Mammary epithelial cell (primary cell): ENCODE measurements at regions of chr1 and their contacts with region 1.

Region 1: DNA sequence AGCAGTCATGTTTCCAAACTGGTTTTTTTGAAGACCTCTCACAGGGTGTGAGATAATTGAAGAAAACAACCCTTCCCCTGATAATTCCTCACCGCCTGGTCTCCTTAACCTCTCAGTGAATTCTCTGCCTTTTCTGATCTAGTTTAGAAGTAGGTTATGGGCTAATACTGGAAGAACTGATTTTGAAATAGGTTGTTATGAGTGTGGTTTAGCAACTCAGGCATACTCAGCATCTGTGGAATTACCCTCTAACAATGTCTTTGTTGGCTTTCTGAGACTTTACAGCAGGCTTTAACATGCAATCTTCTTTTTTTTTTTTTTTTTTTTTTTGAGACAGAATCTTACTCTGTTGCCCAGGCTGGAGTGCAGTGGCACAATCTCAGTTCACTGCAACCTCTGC is 10.2 kb upstream of the PLD5 start:
- DNase-seq: peak; percentile 81
- H3K4me3 ChIP-seq: no peak overlapping the region
- H3K27ac ChIP-seq: peak overlapping the region; percentile 56
- H3K4me1 ChIP-seq: peaks cover 45% of the 10 kb centered on the region
- H3K27me3 ChIP-seq: no peaks in the 10 kb centered on the region
- CTCF ChIP-seq: no peak

Region 2: GRCh38 chr1:242489545-242489944 is 45.2 kb before region 1 on chr1:
- CTCF ChIA-PET with region 1: no interaction called
- dilution Hi-C with region 1: no loop called
- in situ Hi-C with region 1: no loop called
- intact Hi-C with region 1: no loop called
- DNase-seq: no peak
- H3K4me3 ChIP-seq: no peak overlapping the region
- H3K27ac ChIP-seq: no peak overlapping the region
- H3K4me1 ChIP-seq: no peaks in the 10 kb centered on the region
- H3K27me3 ChIP-seq: no peaks in the 10 kb centered on the region
- CTCF ChIP-seq: no peak

Region 3: GRCh38 chr1:242605521-242605920 is 70.8 kb after region 1 on chr1:
- CTCF ChIA-PET with region 1: no interaction called
- dilution Hi-C with region 1: loop called (anchors 5 kb)
- in situ Hi-C with region 1: no loop called
- intact Hi-C with region 1: loop called (anchors 5 kb)
- DNase-seq: peak; percentile 76
- H3K4me3 ChIP-seq: no peak overlapping the region
- H3K27ac ChIP-seq: no peak overlapping the region
- H3K4me1 ChIP-seq: peaks cover 23% of the 10 kb centered on the region
- H3K27me3 ChIP-seq: no peaks in the 10 kb centered on the region
- CTCF ChIP-seq: no peak

Region 4: DNA sequence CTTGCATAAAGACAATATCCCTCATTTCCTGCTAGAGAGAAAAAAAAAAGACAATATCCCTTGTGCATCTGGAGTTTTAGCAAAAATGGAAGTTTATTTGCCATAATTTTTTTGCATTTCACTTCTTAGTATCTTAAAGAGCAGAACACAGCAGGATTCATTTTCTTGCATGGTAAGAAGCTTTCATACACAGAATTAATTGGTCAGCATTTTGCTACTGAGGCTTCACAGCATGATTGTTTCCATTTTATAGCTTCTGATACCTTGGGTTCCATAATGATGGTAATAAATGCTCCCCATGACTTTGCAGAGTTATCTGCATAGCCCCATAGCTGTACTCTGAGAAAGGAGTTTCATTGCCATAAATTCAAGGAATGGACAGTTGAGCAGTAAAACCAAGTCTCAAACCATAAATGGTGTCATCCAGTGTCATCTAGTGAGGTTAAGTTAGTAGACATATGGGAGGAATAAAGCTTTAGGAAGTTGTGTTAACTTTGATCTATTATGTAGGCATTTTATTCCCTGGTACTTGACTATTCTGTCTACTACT is 78.6 kb after region 1 on chr1:
- CTCF ChIA-PET with region 1: no interaction called
- dilution Hi-C with region 1: loop called (anchors 5 kb)
- in situ Hi-C with region 1: no loop called
- intact Hi-C with region 1: loop called (anchors 5 kb)
- DNase-seq: no peak
- H3K4me3 ChIP-seq: no peak overlapping the region
- H3K27ac ChIP-seq: no peak overlapping the region
- H3K4me1 ChIP-seq: peaks cover 8% of the 10 kb centered on the region
- H3K27me3 ChIP-seq: no peaks in the 10 kb centered on the region
- CTCF ChIP-seq: no peak